ENCODE measurements at regions of chr2 and their contacts with region 1.

Region 1: GRCh38 chr2:62485761-62486438 is 20.1 kb downstream of the TMEM17 start:
- DNase-seq: peak; percentile 30
- ATAC-seq: peak; percentile 65
- H3K4me3 ChIP-seq: no peak overlapping the region
- H3K27ac ChIP-seq: peak overlapping the region; percentile 69; the same call in 1 of the 2 replicates
- H3K4me1 ChIP-seq: peaks cover 8% of the 10 kb centered on the region
- H3K27me3 ChIP-seq: no peaks in the 10 kb centered on the region
- CTCF ChIP-seq: no peak
- POLR2A ChIP-seq: no peak
- RAD21 ChIP-seq: no peak

Region 2: GRCh38 chr2:62577994-62578781 is 92.3 kb after region 1 on chr2:
- CTCF ChIA-PET with region 1: no interaction called
- POLR2A ChIA-PET with region 1: no interaction called
- dilution Hi-C with region 1: no loop called
- in situ Hi-C with region 1: no loop called
- intact Hi-C with region 1: no loop called
- DNase-seq: peak; percentile 92
- ATAC-seq: peak; percentile 51
- H3K4me3 ChIP-seq: no peak overlapping the region
- H3K27ac ChIP-seq: peak overlapping the region; percentile 90
- H3K4me1 ChIP-seq: peaks cover 22% of the 10 kb centered on the region
- H3K27me3 ChIP-seq: no peaks in the 10 kb centered on the region
- CTCF ChIP-seq: no peak
- POLR2A ChIP-seq: no peak
- RAD21 ChIP-seq: no peak

Region 3: DNA sequence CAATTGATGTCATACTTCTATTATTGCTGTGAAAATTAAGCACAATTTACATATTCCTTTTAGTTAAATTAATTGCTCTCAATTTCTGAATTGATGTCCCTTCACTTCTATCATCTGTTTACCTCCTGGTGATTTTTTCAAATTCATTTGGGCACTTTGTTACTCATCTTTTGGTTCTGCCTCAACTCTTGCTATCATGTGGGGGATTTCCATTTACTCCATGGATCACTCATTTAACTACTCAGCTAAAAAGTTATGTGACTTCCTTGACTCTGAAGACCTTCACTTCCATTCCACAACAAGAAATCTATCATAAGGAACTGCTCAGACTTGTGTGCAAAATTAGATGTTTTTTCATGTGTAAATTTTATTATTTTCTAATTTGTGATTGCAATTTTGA is 345.8 kb after region 1 on chr2:
- CTCF ChIA-PET with region 1: no interaction called
- POLR2A ChIA-PET with region 1: no interaction called
- dilution Hi-C with region 1: no loop called
- in situ Hi-C with region 1: no loop called
- intact Hi-C with region 1: no loop called
- DNase-seq: no peak
- ATAC-seq: no peak
- H3K4me3 ChIP-seq: no peak overlapping the region
- H3K27ac ChIP-seq: no peak overlapping the region
- H3K4me1 ChIP-seq: no peaks in the 10 kb centered on the region
- H3K27me3 ChIP-seq: no peaks in the 10 kb centered on the region
- CTCF ChIP-seq: no peak
- POLR2A ChIP-seq: no peak
- RAD21 ChIP-seq: no peak

Region 4: GRCh38 chr2:63029058-63029457 is 543.2 kb after region 1 on chr2:
- CTCF ChIA-PET with region 1: no interaction called
- POLR2A ChIA-PET with region 1: interaction called, 13 read pairs
- dilution Hi-C with region 1: no loop called
- in situ Hi-C with region 1: no loop called
- intact Hi-C with region 1: no loop called
- DNase-seq: peak; percentile 73
- ATAC-seq: peak; percentile 40; the same call in 1 of the 2 replicates
- H3K4me3 ChIP-seq: no peak overlapping the region
- H3K27ac ChIP-seq: no peak overlapping the region
- H3K4me1 ChIP-seq: no peaks in the 10 kb centered on the region
- H3K27me3 ChIP-seq: no peaks in the 10 kb centered on the region
- CTCF ChIP-seq: no peak
- POLR2A ChIP-seq: no peak
- RAD21 ChIP-seq: no peak

Measured in IMR-90 (cell line).